Activated CD4-positive, alpha-beta T cell treated with anti-CD3 and anti-CD28 coated beads, Interleukin-2, amount 10 ng/mL, durations not matched to agents 24 days and 14 days (primary cell): ENCODE measurements at regions of chr7 and their contacts with region 1.

Region 1: GRCh38 chr7:116984917-116985316 is 31.6 kb downstream of the ST7 start:
- DNase-seq: no peak
- H3K4me3 Mint-ChIP-seq: no peak overlapping the region
- H3K27ac Mint-ChIP-seq: no peak overlapping the region
- H3K4me1 Mint-ChIP-seq: no peaks in the 10 kb centered on the region
- H3K27me3 Mint-ChIP-seq: peaks cover 2% of the 10 kb centered on the region

Region 2: DNA sequence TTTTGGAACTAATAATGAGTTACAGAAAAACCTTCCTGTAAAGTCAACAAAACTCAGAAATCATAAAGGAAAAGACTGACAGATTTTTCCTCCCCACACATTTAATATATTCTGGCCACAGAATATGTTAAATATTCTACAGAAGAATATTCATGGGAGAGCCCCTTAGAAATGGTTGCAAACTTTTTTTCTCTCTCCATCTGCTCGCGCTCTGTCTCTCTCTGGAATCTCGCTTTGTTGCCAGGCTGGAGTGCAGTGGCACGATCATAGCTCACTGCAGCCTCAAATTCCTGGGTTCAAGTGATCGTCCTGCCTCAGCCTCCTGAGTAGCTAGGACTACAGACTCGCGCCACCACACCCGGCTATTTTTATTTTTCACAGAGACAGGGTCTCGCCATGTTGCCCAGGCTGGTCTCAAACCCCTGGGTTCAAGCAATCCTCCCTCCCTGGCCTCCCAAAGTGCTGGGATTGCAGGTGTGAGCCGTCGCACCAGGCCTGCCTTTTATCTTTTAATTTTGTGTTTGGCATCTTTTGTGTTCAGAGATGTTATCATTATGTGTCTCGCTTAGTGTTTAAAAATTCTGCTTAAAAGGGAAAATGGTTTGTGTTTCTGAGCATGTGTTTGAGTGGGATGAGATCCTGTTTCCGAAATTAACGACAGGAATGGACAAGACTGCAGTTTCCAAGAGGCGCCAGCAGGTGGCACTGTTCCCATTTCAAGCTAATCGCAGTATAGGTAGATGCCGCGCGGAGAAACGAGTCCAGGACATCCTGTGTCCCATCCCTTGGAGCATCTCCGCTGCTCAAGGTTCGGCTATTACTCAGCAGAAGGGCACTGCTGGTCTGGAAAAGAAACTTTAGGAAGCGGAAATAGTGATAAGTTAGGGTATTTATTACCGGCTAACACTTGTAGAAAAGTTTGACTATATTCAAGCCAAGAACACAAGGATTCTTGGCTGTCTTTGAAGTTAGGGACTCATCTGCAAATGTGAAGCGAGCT is 54.7 kb before region 1 on chr7:
- intact Hi-C with region 1: loop called (anchors 2 kb)
- DNase-seq: peak; percentile 90
- H3K4me3 Mint-ChIP-seq: no peak overlapping the region
- H3K27ac Mint-ChIP-seq: no peak overlapping the region
- H3K4me1 Mint-ChIP-seq: peaks cover 4% of the 10 kb centered on the region
- H3K27me3 Mint-ChIP-seq: peaks cover 23% of the 10 kb centered on the region

Region 3: GRCh38 chr7:117066668-117067067 is 81.8 kb after region 1 on chr7:
- intact Hi-C with region 1: no loop called
- DNase-seq: no peak
- H3K4me3 Mint-ChIP-seq: no peak overlapping the region
- H3K27ac Mint-ChIP-seq: no peak overlapping the region
- H3K4me1 Mint-ChIP-seq: peaks cover 1% of the 10 kb centered on the region
- H3K27me3 Mint-ChIP-seq: peaks cover 2% of the 10 kb centered on the region

Region 4: GRCh38 chr7:117119192-117119924 is 134.4 kb after region 1 on chr7:
- intact Hi-C with region 1: loop called (anchors 1 kb)
- DNase-seq: peak; percentile 90
- H3K4me3 Mint-ChIP-seq: no peak overlapping the region
- H3K27ac Mint-ChIP-seq: no peak overlapping the region
- H3K4me1 Mint-ChIP-seq: no peaks in the 10 kb centered on the region
- H3K27me3 Mint-ChIP-seq: peaks cover 26% of the 10 kb centered on the region

Region 5: DNA sequence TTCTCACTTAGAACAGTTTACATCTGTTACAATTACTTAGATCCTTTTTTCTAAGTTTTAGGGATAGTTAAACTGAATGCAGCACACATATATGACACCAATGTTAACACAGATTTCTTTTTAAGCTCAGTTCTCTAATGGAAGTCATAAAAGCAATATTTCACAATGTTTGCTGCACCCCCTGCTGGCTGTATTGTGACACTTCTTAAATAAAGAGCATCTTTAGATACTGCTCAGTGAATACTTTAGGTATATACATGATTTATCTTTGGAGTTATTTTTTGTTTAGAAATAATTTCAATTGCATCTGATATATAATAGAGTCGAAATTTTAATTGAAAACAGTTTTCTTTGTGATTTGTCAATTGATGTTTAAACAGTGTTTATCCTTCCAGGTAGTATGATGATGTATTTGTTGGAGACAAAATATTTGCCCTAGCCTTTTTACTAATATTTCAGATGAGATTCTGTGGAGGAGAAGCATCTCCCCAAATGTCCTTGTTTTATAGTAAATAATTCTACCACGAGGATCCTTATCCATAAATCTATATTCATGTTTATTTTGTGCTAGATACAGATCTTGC is 142.8 kb after region 1 on chr7:
- intact Hi-C with region 1: loop called (anchors 1 kb)
- DNase-seq: peak; percentile 79
- H3K4me3 Mint-ChIP-seq: no peak overlapping the region
- H3K27ac Mint-ChIP-seq: no peak overlapping the region
- H3K4me1 Mint-ChIP-seq: peaks cover 2% of the 10 kb centered on the region
- H3K27me3 Mint-ChIP-seq: peaks cover 5% of the 10 kb centered on the region